ENCODE measurements at regions of chr17 and their contacts with region 1.

Region 1: GRCh38 chr17:66348584-66349165 is 46.3 kb downstream of the PRKCA start:
- DNase-seq: no peak
- ATAC-seq: no peak
- H3K4me3 ChIP-seq: no peak overlapping the region
- H3K4me3 Mint-ChIP-seq: no peak overlapping the region
- H3K27ac ChIP-seq: no peak overlapping the region
- H3K27ac Mint-ChIP-seq: no peak overlapping the region
- H3K4me1 ChIP-seq: peaks cover 30% of the 10 kb centered on the region
- H3K4me1 Mint-ChIP-seq: peaks cover 65% of the 10 kb centered on the region
- H3K27me3 ChIP-seq: no peaks in the 10 kb centered on the region
- H3K27me3 Mint-ChIP-seq: no peaks in the 10 kb centered on the region
- CTCF ChIP-seq: no peak

Region 2: GRCh38 chr17:66043456-66043855 is 305.2 kb before region 1 on chr17:
- CTCF ChIA-PET with region 1: no interaction called
- POLR2A ChIA-PET with region 1: no interaction called
- intact Hi-C with region 1: no loop called
- DNase-seq: no peak
- ATAC-seq: no peak
- H3K4me3 ChIP-seq: no peak overlapping the region
- H3K4me3 Mint-ChIP-seq: no peak overlapping the region
- H3K27ac ChIP-seq: no peak overlapping the region
- H3K27ac Mint-ChIP-seq: no peak overlapping the region
- H3K4me1 ChIP-seq: no peaks in the 10 kb centered on the region
- H3K4me1 Mint-ChIP-seq: no peaks in the 10 kb centered on the region
- H3K27me3 ChIP-seq: no peaks in the 10 kb centered on the region
- H3K27me3 Mint-ChIP-seq: no peaks in the 10 kb centered on the region
- CTCF ChIP-seq: no peak

Region 3: GRCh38 chr17:66310528-66311148 is 38.0 kb before region 1 on chr17:
- CTCF ChIA-PET with region 1: no interaction called
- POLR2A ChIA-PET with region 1: no interaction called
- intact Hi-C with region 1: loop called in 1 of 2 experiments (anchors 5 kb)
- DNase-seq: peak in 2 of 9 experiments; percentile 20 to 37
- ATAC-seq: no peak
- H3K4me3 ChIP-seq: no peak overlapping the region
- H3K4me3 Mint-ChIP-seq: no peak overlapping the region
- H3K27ac ChIP-seq: no peak overlapping the region
- H3K27ac Mint-ChIP-seq: peak overlapping the region; percentile 69
- H3K4me1 ChIP-seq: peaks cover 78% of the 10 kb centered on the region
- H3K4me1 Mint-ChIP-seq: peaks cover 89% of the 10 kb centered on the region
- H3K27me3 ChIP-seq: no peaks in the 10 kb centered on the region
- H3K27me3 Mint-ChIP-seq: no peaks in the 10 kb centered on the region
- CTCF ChIP-seq: no peak

Region 4: DNA sequence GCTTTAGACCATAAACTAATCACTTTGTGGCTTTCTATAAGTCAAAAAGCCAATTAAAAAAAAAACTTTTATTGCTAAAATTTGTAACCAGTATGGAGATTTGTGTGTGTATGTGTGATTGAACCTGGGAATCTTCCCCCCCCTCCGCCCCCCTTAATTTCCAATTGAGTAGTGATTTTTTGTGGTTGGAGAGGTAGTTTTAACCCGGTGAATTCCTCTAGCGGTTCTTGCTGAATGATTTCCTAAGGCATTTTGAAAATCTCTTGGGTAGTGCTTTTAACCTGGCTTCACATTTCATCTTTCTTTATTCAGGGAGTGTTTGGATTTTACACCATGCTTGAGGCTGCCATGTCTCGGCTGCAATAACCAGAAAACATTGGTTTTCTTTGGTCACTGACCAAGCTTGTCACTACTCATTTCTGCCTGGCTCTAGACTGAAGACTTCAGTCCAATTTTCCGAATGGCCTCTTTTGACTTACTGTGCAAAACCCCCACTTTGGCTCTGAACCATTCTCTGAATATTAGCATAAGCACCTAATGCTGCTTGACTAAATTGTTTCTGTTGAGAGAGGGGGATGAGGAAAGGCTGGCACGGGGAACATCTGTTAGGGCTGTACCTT is 10.7 kb before region 1 on chr17:
- CTCF ChIA-PET with region 1: no interaction called
- POLR2A ChIA-PET with region 1: no interaction called
- intact Hi-C with region 1: no loop called
- DNase-seq: no peak
- ATAC-seq: no peak
- H3K4me3 ChIP-seq: no peak overlapping the region
- H3K4me3 Mint-ChIP-seq: no peak overlapping the region
- H3K27ac ChIP-seq: no peak overlapping the region
- H3K27ac Mint-ChIP-seq: peak overlapping the region; percentile 52
- H3K4me1 ChIP-seq: peaks cover 72% of the 10 kb centered on the region
- H3K4me1 Mint-ChIP-seq: peaks cover 76% of the 10 kb centered on the region
- H3K27me3 ChIP-seq: no peaks in the 10 kb centered on the region
- H3K27me3 Mint-ChIP-seq: no peaks in the 10 kb centered on the region
- CTCF ChIP-seq: no peak

Region 5: DNA sequence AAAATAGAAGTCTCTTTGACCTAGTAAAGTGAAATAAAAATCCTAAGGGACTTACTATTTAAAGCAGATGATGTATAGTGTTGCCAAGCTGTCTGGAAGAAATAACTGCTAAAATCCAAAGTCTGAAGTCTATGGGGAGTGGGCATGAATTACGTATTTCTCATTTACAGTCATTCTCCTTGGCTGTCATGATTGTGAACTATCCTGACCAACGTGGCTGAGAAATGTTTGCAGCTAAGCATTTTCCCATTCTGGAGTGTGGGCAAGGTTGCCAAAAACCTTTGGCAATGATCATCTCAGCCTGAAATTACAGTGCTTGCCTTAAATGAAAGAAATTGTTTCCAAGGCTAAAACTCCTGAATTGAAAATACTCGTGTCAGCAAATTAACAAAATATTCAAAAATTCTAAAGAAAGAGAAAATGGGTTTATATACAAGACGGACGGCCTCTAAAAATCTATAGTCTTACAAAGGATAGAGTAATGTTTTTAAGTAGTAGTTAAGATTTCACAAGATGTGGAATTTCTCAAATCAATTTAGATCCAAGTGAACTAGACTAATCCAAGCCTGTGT is 772.7 kb after region 1 on chr17:
- CTCF ChIA-PET with region 1: no interaction called
- POLR2A ChIA-PET with region 1: no interaction called
- intact Hi-C with region 1: no loop called
- DNase-seq: no peak
- ATAC-seq: no peak
- H3K4me3 ChIP-seq: no peak overlapping the region
- H3K4me3 Mint-ChIP-seq: no peak overlapping the region
- H3K27ac ChIP-seq: no peak overlapping the region
- H3K27ac Mint-ChIP-seq: no peak overlapping the region
- H3K4me1 ChIP-seq: no peaks in the 10 kb centered on the region
- H3K4me1 Mint-ChIP-seq: peaks cover 6% of the 10 kb centered on the region
- H3K27me3 ChIP-seq: no peaks in the 10 kb centered on the region
- H3K27me3 Mint-ChIP-seq: no peaks in the 10 kb centered on the region
- CTCF ChIP-seq: no peak

Measured in CD8-positive, alpha-beta T cell (primary cell).